ENCODE measurements at regions of chr19 and their contacts with region 1.

Region 1: GRCh38 chr19:14198384-14199376 is 7.3 kb downstream of the ADGRL1 start:
- DNase-seq: no peak
- H3K4me3 ChIP-seq: no peak overlapping the region
- CTCF ChIP-seq: no peak
- POLR2A ChIP-seq: no peak

Region 2: DNA sequence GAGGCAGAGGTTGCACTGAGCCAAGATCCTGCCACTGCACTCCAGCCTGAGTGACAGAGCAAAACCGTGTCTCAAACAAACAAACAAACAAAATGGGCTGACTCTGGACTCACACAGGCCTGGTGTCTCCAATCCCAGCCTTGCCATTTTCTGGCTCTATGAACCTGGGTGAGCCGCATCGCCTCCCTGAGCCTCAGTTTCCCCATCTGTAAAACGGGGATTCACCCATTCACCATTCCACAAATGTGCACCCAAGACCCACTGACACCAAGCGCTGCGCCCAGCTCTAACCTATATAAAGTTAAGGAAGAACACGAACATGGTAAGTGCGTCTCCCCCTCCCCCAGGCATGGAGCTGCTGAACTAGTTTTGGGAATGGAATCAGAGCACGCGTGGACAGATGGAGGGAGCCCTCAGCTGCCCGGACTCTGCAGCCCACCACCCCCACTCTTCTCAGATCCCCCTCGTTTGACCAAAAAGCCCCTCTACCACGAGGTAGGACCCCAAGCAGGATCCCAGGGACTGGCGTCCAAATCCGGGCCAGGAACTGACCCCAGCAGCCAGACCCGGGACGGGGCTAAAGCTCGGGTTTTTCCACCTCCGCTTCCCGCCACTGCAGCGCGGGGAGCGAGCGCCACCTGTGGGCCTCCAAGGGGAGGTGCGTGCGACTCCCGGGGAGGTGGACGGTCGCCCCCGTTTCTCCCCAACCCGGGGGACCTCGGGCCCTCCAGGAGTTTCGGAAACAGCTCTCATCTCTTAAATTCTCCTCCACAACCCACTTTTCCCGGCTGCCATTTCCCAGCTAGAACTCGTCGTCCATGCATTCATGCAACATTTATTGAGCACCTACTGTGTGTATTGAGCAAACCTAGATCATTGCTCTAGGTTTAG is 149.6 kb after region 1 on chr19:
- intact Hi-C with region 1: loop called (anchors 10 kb)
- DNase-seq: peak in 1 of 2 donors; percentile 94
- H3K4me3 ChIP-seq: no peak overlapping the region
- CTCF ChIP-seq: peak in 1 of 3 donors; percentile 87
- POLR2A ChIP-seq: no peak

Measured in lower leg skin (tissue), 4 donors.